Activated CD8-positive, alpha-beta memory T cell treated with anti-CD3 and anti-CD28 coated beads, Interleukin-2, amount 10 ng/mL, durations not matched to agents 7 days and 5 days (primary cell): ENCODE measurements at regions of chr16 and their contacts with region 1.

Region 1: GRCh38 chr16:96935-97381 is 18.9 kb downstream of the MPG start:
- DNase-seq: peak; percentile 93
- ATAC-seq: peak; percentile 97
- H3K4me3 Mint-ChIP-seq: no peak overlapping the region
- H3K27ac Mint-ChIP-seq: peak overlapping the region; percentile 5
- H3K4me1 Mint-ChIP-seq: peaks cover 4% of the 10 kb centered on the region
- H3K27me3 Mint-ChIP-seq: no peaks in the 10 kb centered on the region

Region 2: DNA sequence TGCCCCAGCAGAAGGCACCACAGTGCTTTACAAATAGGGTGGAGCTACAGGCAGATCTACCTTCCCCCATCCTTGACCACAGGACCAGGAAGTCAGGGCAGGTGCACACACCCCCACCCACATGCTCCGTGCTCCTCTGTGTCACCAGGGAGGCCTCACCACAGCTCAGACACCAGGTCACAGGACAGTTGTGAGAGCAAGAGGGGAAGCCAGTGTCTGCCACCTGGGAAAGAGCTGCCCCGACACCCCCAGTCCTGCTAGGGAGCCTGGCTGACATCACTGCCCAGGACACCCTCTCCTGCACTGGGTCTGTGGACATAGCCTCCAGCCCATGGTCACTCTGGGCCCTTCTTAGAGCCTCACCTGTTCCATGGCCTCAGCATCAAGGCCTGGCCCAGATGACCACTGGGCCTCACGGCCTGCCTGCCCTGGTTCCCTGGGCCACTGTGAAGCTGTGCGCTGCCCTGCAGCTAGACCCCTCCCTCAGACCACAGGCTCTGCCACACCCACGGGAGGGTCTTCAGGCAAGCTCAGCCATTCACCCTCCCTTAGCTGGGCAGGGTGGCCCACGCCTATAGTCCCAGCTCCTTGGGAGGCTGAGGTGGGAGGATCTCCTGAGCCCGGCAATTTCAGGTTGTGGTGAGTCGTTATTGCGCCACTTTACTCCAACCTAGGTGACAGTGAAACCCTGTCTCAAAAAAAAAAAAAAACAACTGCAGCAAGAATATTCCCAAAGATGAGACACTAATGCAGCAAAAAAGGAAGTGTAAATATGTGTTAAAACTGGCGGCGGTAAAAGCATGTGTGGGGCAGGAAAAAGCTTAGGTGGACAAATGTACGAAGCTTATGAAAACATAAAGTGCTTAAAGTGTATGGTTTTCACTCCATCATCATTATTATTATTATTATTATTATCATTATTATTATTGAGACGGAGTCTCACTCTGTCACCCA is 57.7 kb before region 1 on chr16:
- CTCF ChIA-PET with region 1: interaction called, 12 read pairs
- DNase-seq: peak; percentile 84
- ATAC-seq: peak; percentile 88
- H3K4me3 Mint-ChIP-seq: no peak overlapping the region
- H3K27ac Mint-ChIP-seq: peak overlapping the region; percentile 58
- H3K4me1 Mint-ChIP-seq: peaks cover 32% of the 10 kb centered on the region
- H3K27me3 Mint-ChIP-seq: no peaks in the 10 kb centered on the region

Region 3: DNA sequence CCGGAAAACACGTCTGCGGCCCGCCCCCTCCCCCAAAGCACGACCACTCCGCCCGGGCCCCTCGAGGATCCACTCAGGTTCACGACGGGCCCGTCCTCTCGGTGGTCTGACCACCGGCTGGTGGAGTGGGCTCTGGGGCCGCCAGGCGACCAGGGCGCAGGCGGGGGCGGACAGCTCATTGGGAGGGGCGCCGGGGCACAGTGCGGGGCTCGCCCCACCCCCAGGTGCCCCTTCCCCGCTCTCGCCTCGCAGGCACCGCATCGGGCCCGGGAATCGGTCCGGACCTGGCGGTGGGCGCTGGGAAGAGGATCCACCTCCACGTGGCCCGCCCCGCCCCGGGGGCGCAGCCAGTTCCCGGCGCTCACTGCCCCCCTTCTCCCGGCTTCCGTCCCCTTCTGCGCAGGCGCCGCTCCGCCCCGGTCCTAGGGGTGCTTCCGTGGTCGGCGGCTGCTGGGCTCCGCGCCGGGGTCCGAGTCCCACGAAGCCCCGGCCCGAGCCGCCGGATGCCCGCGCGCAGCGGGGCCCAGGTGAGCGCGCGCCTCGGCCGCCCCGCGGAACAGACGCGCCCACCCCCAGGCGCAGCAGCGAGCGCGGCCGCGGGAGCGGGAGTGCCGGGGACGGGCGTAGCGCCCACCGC is 19.0 kb before region 1 on chr16 and contains the start of gene MPG:
- CTCF ChIA-PET with region 1: interaction called, 350 read pairs
- DNase-seq: peak; percentile 88
- ATAC-seq: peak; percentile 85
- H3K4me3 Mint-ChIP-seq: peak within 1 kb of the TSS; percentile 86
- H3K27ac Mint-ChIP-seq: peak within 1 kb of the TSS; percentile 86
- H3K4me1 Mint-ChIP-seq: peaks cover 28% of the 10 kb centered on the region
- H3K27me3 Mint-ChIP-seq: peaks cover 19% of the 10 kb centered on the region
- total RNA-seq, gene MPG: 60.2 to 60.6 TPM

Region 4: GRCh38 chr16:84718-85406 is 12.1 kb before region 1 on chr16:
- CTCF ChIA-PET with region 1: interaction called, 42 read pairs
- DNase-seq: peak; percentile 89
- ATAC-seq: peak; percentile 86
- H3K4me3 Mint-ChIP-seq: no peak overlapping the region
- H3K27ac Mint-ChIP-seq: peak overlapping the region; percentile 92
- H3K4me1 Mint-ChIP-seq: peaks cover 25% of the 10 kb centered on the region
- H3K27me3 Mint-ChIP-seq: no peaks in the 10 kb centered on the region